MCF 10A (cell line): ENCODE measurements at regions of chr4 and their contacts with region 1.

Region 1: DNA sequence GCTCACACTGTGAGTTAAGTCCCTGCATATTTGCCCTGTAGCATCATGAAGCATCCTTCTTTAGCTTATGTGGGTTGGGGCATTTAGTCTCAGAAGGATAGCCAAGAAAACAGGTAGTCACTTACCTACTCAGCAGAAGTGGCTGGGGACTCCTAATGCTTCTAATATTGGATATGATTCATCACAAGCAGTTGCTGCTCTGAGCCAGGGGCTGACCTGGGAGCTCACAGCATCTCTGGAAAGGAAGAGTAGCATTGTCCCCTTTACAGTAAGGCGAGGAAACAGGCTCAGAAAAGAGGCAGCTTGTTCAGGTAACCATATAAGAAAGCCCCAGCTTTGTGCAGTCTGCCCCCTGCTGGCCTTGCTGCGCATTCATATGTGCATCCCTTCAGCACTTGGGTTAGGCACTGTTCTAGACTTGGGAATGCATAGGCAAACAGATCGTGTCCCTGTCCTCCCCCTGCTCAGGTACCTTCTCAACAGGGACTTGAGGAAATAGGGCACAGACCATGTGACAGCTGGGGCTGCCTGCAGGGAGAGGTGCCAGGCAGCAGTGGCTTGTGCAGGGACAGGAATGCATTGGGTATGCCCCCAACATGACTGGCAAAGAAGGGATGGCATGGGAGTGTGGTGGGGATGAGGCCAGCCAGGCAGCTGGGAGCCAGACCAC is 35.7 kb upstream of the TBC1D14 start:
- DNase-seq: peak; percentile 65
- H3K4me3 Mint-ChIP-seq: no peak overlapping the region
- H3K27ac Mint-ChIP-seq: no peak overlapping the region
- H3K4me1 Mint-ChIP-seq: no peaks in the 10 kb centered on the region
- H3K27me3 Mint-ChIP-seq: no peaks in the 10 kb centered on the region
- CTCF ChIP-seq: peak; percentile 88

Region 2: GRCh38 chr4:6716018-6716911 is 157.7 kb before region 1 on chr4 and contains the start of gene BLOC1S4:
- CTCF ChIA-PET with region 1: interaction called, 208 read pairs
- POLR2A ChIA-PET with region 1: interaction called, 24 read pairs
- intact Hi-C with region 1: loop called (anchors 1 kb)
- DNase-seq: peak; percentile 87
- H3K4me3 Mint-ChIP-seq: peak within 1 kb of the TSS; percentile 80
- H3K27ac Mint-ChIP-seq: peak within 1 kb of the TSS; percentile 81
- H3K4me1 Mint-ChIP-seq: peaks cover 13% of the 10 kb centered on the region
- H3K27me3 Mint-ChIP-seq: no peaks in the 10 kb centered on the region
- CTCF ChIP-seq: no peak
- total RNA-seq, gene BLOC1S4: 10.6 and 13.0 TPM in 2 replicates

Region 3: DNA sequence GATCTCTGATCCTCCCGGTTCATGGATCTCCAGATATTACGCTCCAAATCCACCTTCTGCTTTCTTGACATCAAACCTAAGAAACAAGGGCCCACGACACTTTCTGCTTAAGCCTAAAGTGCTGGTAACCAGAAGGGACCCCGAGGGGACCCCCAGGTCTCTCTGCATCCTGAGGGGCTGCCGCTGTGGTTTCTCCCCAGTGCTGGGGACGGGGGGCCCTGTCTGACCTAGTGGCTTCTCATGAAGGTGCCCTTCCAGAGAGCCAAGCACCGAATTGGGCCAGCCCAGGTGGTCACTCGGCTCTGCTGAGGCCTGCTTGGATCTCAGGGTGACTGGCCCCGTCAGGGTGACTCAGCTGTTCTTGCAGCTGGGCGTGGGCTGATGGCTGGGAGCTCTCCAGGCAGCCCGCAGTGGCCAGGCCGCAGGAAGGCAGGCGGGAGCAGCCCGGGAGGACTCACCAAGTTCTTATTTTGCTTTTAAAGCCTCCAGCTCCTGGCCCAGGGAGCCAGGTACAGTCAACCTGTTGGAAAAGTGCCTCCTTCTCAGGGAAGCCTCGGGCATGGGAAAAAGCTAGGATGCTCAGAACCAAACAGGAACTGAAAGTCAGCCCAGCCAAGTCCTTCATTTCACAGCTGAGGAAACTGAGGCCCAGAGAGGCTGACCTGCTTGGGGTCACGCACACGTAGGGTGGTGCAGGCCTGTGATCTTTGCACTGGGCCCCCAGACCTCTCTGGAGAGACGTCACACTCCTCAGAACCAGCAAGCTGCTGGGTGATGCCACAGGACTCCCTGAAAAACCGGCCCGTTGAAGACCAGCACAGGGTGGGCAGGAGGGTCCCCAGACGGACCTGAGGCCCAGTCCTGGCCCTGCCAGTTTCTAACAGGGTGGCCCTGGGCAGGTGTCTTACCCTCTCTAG is 141.2 kb before region 1 on chr4:
- CTCF ChIA-PET with region 1: interaction called, 23 read pairs
- POLR2A ChIA-PET with region 1: no interaction called
- intact Hi-C with region 1: no loop called
- DNase-seq: peak; percentile 87
- H3K4me3 Mint-ChIP-seq: no peak overlapping the region
- H3K27ac Mint-ChIP-seq: peak overlapping the region; percentile 97
- H3K4me1 Mint-ChIP-seq: peaks cover 4% of the 10 kb centered on the region
- H3K27me3 Mint-ChIP-seq: no peaks in the 10 kb centered on the region
- CTCF ChIP-seq: no peak

Region 4: DNA sequence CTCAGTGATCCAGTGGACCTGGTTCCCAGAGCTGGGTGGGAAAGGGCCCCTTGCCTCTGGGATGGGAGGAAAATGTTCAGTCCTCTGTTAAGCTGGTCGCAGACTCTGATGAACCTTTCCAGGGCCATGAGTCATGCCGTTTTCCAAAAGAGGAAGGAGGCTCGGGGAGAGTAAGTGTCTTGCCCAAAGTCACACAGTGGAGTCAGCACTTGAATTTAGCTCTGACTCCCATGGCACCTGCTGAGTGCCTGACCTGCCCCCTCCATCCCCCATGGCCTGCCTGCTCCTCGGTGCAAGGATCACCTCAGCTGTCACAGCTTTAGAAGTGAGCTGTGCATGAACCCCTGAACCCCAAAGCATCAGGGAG is 105.4 kb before region 1 on chr4:
- CTCF ChIA-PET with region 1: interaction called, 25 read pairs
- POLR2A ChIA-PET with region 1: interaction called, 3 read pairs
- intact Hi-C with region 1: no loop called
- DNase-seq: peak; percentile 66
- H3K4me3 Mint-ChIP-seq: no peak overlapping the region
- H3K27ac Mint-ChIP-seq: peak overlapping the region; percentile 42
- H3K4me1 Mint-ChIP-seq: peaks cover 48% of the 10 kb centered on the region
- H3K27me3 Mint-ChIP-seq: no peaks in the 10 kb centered on the region
- CTCF ChIP-seq: no peak

Region 5: GRCh38 chr4:6845027-6845426 is 28.9 kb before region 1 on chr4:
- CTCF ChIA-PET with region 1: interaction called, 10 read pairs
- POLR2A ChIA-PET with region 1: no interaction called
- intact Hi-C with region 1: no loop called
- DNase-seq: no peak
- H3K4me3 Mint-ChIP-seq: no peak overlapping the region
- H3K27ac Mint-ChIP-seq: no peak overlapping the region
- H3K4me1 Mint-ChIP-seq: peaks cover 7% of the 10 kb centered on the region
- H3K27me3 Mint-ChIP-seq: no peaks in the 10 kb centered on the region
- CTCF ChIP-seq: no peak

Region 6: GRCh38 chr4:6885951-6886557 is 12.1 kb after region 1 on chr4:
- CTCF ChIA-PET with region 1: interaction called, 67 read pairs
- POLR2A ChIA-PET with region 1: interaction called, 3 read pairs
- intact Hi-C with region 1: no loop called
- DNase-seq: peak; percentile 58
- H3K4me3 Mint-ChIP-seq: no peak overlapping the region
- H3K27ac Mint-ChIP-seq: no peak overlapping the region
- H3K4me1 Mint-ChIP-seq: peaks cover 6% of the 10 kb centered on the region
- H3K27me3 Mint-ChIP-seq: no peaks in the 10 kb centered on the region
- CTCF ChIP-seq: no peak

Region 7: GRCh38 chr4:7017446-7018330 is 143.8 kb after region 1 on chr4:
- CTCF ChIA-PET with region 1: no interaction called
- POLR2A ChIA-PET with region 1: no interaction called
- intact Hi-C with region 1: no loop called
- DNase-seq: no peak
- H3K4me3 Mint-ChIP-seq: no peak overlapping the region
- H3K27ac Mint-ChIP-seq: no peak overlapping the region
- H3K4me1 Mint-ChIP-seq: peaks cover 10% of the 10 kb centered on the region
- H3K27me3 Mint-ChIP-seq: no peaks in the 10 kb centered on the region
- CTCF ChIP-seq: no peak

Region 8: DNA sequence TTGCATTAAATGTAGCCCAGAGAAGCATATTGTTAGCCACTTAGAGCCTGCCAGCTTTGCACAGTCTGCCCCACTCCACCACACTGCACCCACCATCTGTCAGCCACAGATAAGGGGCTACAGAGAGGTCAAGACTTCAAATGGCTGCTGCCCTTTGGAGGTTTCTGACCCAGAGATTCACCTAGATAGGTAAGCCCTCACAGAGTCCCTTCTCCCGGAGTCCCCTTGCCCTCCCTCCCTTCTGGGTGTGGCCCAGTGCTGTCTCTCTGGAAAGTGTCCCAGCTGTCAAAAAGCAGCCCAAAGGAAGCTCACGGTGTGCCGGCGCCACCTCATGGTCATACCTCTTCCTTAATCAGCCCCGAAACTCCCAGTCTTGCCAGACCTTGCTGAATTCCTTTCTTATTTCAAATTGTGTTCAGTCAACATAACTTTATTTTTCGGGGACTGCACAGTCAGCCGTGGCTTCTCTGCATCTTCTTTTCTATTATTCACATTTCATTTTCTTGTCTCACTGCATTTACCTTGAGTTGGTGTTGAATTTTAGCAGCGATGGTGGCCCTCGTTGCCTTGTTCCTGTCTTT is 208.1 kb after region 1 on chr4:
- CTCF ChIA-PET with region 1: interaction called, 15 read pairs
- POLR2A ChIA-PET with region 1: no interaction called
- intact Hi-C with region 1: no loop called
- DNase-seq: peak; percentile 80
- H3K4me3 Mint-ChIP-seq: no peak overlapping the region
- H3K27ac Mint-ChIP-seq: no peak overlapping the region
- H3K4me1 Mint-ChIP-seq: peaks cover 7% of the 10 kb centered on the region
- H3K27me3 Mint-ChIP-seq: peaks cover 17% of the 10 kb centered on the region
- CTCF ChIP-seq: peak; percentile 57

Region 9: GRCh38 chr4:7151668-7152227 is 277.8 kb after region 1 on chr4:
- CTCF ChIA-PET with region 1: no interaction called
- POLR2A ChIA-PET with region 1: no interaction called
- intact Hi-C with region 1: no loop called
- DNase-seq: peak; percentile 36
- H3K4me3 Mint-ChIP-seq: no peak overlapping the region
- H3K27ac Mint-ChIP-seq: no peak overlapping the region
- H3K4me1 Mint-ChIP-seq: peaks cover 11% of the 10 kb centered on the region
- H3K27me3 Mint-ChIP-seq: peaks cover 24% of the 10 kb centered on the region
- CTCF ChIP-seq: peak; percentile 18